ENCODE measurements at regions of chr5 and their contacts with region 1.

Region 1: GRCh38 chr5:110335361-110336066 is 391.0 kb downstream of the TMEM232 start:
- DNase-seq: no peak
- ATAC-seq: no peak
- H3K4me3 ChIP-seq: no peak overlapping the region
- H3K4me3 Mint-ChIP-seq: no peak overlapping the region
- H3K27ac ChIP-seq: no peak overlapping the region
- H3K27ac Mint-ChIP-seq: no peak overlapping the region
- H3K4me1 ChIP-seq: no peaks in the 10 kb centered on the region
- H3K4me1 Mint-ChIP-seq: no peaks in the 10 kb centered on the region
- H3K27me3 ChIP-seq: no peaks in the 10 kb centered on the region
- H3K27me3 Mint-ChIP-seq: peaks cover 0 to 2% of the 10 kb centered on the region in 2 donors

Region 2: GRCh38 chr5:109304309-109304708 is 1031.2 kb before region 1 on chr5:
- CTCF ChIA-PET with region 1: no interaction called
- POLR2A ChIA-PET with region 1: no interaction called
- DNase-seq: no peak
- ATAC-seq: no peak
- H3K4me3 ChIP-seq: no peak overlapping the region
- H3K4me3 Mint-ChIP-seq: no peak overlapping the region
- H3K27ac ChIP-seq: no peak overlapping the region
- H3K27ac Mint-ChIP-seq: no peak overlapping the region
- H3K4me1 ChIP-seq: no peaks in the 10 kb centered on the region
- H3K4me1 Mint-ChIP-seq: no peaks in the 10 kb centered on the region
- H3K27me3 ChIP-seq: no peaks in the 10 kb centered on the region
- H3K27me3 Mint-ChIP-seq: no peaks in the 10 kb centered on the region

Region 3: GRCh38 chr5:110354311-110354710 is 18.8 kb after region 1 on chr5:
- CTCF ChIA-PET with region 1: no interaction called
- POLR2A ChIA-PET with region 1: interaction called in 1 of 2 experiments, 11 read pairs
- DNase-seq: no peak
- ATAC-seq: no peak
- H3K4me3 ChIP-seq: no peak overlapping the region
- H3K4me3 Mint-ChIP-seq: no peak overlapping the region
- H3K27ac ChIP-seq: no peak overlapping the region
- H3K27ac Mint-ChIP-seq: no peak overlapping the region
- H3K4me1 ChIP-seq: no peaks in the 10 kb centered on the region
- H3K4me1 Mint-ChIP-seq: no peaks in the 10 kb centered on the region
- H3K27me3 ChIP-seq: no peaks in the 10 kb centered on the region
- H3K27me3 Mint-ChIP-seq: peaks cover 0 to 5% of the 10 kb centered on the region in 2 donors